Ovary (tissue), 10 donors: ENCODE measurements at regions of chr6 and their contacts with region 1.

Region 1: DNA sequence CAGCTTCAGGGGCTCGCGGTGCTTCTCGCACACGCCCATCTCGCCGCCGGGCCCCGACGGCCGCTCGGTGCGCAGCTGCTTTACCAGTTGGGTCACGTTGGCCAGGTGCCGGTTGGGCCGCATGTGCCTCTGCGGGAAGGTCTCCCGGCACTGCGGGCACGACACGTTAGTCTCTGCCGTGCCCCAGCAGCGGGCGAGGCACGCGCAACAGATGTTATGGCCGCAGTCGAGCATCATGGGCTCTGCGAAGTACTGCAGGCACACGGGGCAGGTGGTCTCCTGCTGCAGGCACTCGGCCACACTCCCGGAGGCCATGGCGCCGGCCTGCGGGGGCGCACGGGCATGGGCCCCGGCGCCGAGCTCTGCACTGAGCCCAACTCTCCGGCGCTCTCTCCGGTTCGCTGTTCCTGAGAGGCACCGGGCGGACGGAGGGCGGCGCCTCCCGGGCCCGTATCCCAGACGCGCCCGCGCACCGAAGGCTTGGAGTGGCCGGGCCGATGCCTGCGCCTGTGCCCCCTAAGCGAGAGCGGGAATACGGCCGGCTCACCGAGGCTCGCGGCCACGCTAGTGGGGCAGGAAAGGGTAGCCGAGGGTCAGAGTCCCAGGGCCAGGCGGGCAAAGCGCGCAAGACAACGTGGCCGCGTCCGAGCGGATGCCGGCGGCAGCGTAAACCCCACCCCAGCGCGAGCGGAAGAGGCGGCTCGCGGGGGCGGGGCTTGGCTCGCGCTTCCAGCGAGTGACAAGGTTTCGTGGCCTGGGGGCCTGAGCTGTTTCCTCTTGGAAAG is at the start of gene TRIM27:
- DNase-seq: peak; percentile 87 to 95 (median 92)
- H3K4me3 ChIP-seq: peak within 1 kb of the TSS; percentile 89
- H3K27ac ChIP-seq: peak within 1 kb of the TSS; percentile 48 to 88
- H3K4me1 ChIP-seq: peaks cover 11% of the 10 kb centered on the region
- H3K27me3 ChIP-seq: no peaks in the 10 kb centered on the region
- CTCF ChIP-seq: peak in 2 of 3 donors; percentile 21 to 39
- EP300 ChIP-seq: no peak
- POLR2A ChIP-seq: peak; percentile 79
- total RNA-seq, gene TRIM27: 43.7 to 57.6 (median 48.8) TPM

Region 2: DNA sequence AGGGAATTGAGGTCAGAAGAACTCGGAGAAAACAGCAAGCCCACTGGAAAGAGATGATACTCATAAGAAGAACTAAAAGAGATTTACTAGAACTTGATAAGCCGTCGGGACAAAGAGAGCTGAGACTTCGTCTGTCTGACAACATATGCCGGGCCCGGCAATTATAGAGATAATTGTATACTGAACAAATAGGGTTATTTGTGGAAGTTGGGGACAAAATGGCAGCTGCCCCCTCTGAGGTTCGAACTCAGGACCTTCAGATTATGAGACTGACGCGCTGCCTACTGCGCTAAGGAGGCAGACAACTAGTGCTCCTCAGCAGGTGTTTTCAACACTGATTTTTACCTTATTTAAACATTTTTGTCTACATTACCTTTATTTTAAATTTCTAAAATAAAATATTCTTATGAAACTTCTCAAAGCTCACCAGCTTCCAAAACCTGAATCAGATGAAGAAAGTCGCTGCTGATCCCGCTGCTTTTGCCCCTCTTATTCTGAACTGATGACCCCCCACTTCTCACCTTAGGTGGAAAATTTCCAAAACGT is 29.6 kb after region 1 on chr6:
- intact Hi-C with region 1: loop called in 1 of 4 experiments (anchors 2 kb)
- DNase-seq: peak in 3 of 5 donors; percentile 22 to 42 (median 27)
- H3K4me3 ChIP-seq: peak overlapping the region; percentile 29
- H3K27ac ChIP-seq: no peak overlapping the region
- H3K4me1 ChIP-seq: no peaks in the 10 kb centered on the region
- H3K27me3 ChIP-seq: no peaks in the 10 kb centered on the region
- CTCF ChIP-seq: no peak
- EP300 ChIP-seq: no peak
- POLR2A ChIP-seq: no peak